Mammary epithelial cell (primary cell): ENCODE measurements at regions of chr19 and their contacts with region 1.

Region 1: DNA sequence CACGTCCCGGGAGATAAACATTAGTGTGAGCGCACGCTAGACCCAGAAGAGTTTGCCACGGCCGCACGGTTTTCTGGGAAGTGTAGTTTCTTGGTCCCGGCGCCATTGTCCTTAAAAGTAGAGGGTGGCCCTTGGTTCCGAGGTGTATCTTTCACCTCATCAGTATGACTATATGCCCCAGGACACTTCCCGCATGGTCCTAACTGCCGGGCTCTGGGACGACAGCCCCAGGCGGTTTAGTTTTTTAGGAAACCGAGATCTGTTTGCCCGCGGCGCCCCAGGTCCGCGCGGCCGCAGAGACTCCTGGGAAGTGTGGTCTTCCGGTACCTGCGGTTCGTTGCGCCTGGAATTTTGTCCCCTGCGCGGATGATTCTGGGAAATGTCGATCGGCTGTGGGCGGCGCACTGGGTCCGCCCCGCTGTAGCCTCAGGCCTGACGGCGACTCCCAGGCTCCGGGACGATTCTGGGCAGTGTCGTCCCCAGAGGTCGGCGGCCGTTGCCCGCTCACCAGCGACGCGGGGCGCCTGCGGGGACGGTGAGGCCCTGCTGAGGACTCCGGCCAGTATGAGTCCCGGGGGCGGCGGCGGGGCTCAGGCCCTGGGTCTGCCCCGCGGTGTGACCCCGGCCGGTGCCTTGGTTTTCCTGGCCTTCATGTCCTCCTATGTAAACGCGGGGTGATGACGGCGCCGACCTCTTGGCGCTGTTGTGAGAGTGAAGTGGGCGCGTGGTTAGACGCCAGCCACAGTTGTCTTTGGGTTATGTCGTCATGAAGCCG is at the start of gene ZNF181:
- DNase-seq: peak; percentile 86
- H3K4me3 ChIP-seq: peak within 1 kb of the TSS; percentile 65 to 94 (median 77)
- H3K27ac ChIP-seq: peak within 1 kb of the TSS; percentile 83
- H3K4me1 ChIP-seq: peaks cover 17% of the 10 kb centered on the region
- H3K27me3 ChIP-seq: no peaks in the 10 kb centered on the region
- CTCF ChIP-seq: no peak
- total RNA-seq, gene ZNF181: 5.4 to 16.8 TPM

Region 2: DNA sequence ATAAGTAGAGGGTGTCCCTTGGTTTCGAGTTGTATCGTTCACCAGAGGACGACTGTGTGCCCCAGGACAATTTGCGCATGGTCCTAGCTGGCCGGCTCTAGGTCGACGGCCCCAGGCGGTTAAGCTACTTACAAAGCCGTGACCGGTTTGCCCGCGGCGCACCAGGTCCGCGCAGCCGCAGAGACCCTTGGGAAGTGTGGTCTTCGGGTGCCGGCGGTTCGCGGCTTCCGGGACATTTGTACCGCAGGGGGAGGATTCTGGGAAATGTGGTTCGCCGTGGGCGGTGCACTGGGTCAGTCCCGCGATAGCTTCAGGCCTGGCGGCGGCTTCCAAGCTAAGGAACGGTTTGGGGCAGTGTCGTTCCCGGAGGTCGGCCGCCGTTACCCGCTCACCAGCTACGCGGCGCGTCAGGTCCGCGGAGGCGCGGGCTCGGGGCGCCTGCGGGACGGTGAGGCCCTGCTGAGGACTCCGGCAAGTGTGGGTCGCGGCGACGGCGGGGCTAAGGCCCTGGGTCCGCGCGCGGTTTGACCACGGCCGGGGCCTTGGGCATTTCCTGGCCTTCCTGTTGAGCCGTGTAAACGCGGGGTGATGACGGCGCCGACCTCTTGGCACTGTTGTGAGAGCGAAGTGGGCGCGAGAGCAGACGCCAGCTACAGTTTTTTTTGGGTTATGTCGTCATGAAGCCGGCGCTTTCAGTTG is 56.5 kb before region 1 on chr19 and contains the start of gene ZNF302:
- CTCF ChIA-PET with region 1: no interaction called
- dilution Hi-C with region 1: no loop called
- in situ Hi-C with region 1: no loop called
- intact Hi-C with region 1: loop called (anchors 1 kb)
- DNase-seq: peak; percentile 94
- H3K4me3 ChIP-seq: peak within 1 kb of the TSS; percentile 71 to 95 (median 86)
- H3K27ac ChIP-seq: peak within 1 kb of the TSS; percentile 84
- H3K4me1 ChIP-seq: peaks cover 5% of the 10 kb centered on the region
- H3K27me3 ChIP-seq: no peaks in the 10 kb centered on the region
- CTCF ChIP-seq: no peak
- total RNA-seq, gene ZNF302: 12.1 to 13.8 TPM

Region 3: DNA sequence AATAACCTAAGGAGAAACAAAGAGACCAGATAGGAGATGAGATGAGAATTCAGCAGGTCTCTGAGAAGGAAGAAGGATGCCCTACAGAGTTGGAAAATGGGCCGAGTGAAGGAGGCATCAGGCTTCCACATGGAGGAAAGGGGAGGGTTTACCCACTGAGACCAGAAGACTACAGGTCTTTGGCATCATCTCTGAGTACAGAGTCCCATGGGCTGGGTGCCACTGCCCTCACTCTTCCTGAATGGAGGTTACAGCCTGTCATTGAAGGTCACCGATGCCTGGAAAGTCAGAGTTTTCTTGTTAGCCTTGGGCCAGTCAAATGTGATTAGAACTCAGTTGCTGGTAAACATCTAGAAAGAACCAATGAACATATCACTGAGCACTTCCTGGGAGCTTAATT is 46.7 kb before region 1 on chr19:
- CTCF ChIA-PET with region 1: no interaction called
- dilution Hi-C with region 1: loop called (anchors 5 kb)
- in situ Hi-C with region 1: no loop called
- intact Hi-C with region 1: no loop called
- DNase-seq: no peak
- H3K4me3 ChIP-seq: no peak overlapping the region
- H3K27ac ChIP-seq: no peak overlapping the region
- H3K4me1 ChIP-seq: no peaks in the 10 kb centered on the region
- H3K27me3 ChIP-seq: no peaks in the 10 kb centered on the region
- CTCF ChIP-seq: no peak

Region 4: DNA sequence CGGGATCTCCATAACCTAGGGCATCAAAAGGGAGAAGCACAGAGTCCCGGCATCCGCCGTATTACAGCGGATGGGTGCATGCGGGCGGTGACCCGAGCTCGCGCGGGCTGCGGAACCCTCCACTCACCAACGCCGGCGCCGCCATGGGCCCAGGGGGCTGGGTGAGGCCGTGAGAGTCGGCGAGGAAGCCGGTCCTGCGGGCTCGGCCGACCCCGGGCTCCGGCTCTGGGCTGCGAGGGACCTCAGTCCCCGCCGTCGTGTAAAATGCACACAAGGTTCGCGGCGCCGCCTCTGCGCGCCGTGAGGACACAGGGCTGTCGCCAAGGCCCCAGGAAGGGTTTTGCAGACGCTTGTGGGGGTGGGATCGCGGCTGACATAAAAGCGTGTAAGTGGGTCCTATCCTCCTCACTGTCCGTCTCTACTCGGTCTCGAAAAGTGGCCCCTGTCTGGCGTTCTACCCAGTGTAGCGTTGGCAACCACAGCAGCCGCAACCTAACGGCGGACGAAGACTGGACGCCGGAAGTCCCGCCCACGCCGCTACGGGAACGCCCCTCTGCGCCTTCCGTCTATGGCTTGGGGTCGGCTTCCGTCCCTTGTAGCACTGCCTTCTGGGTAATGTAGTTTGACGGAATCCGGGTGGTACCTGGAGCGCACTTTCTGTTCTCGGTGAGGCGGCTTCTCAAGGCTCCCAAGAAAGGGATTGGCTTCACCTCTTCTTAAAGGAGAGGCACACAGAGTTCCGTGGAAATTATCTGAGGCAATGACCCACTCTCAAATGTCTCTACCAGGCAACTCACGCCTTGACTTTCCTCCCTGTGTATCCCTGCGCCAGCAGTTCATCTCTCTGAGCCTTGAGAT is 38.9 kb after region 1 on chr19 and contains the start of gene ZNF599:
- CTCF ChIA-PET with region 1: no interaction called
- dilution Hi-C with region 1: loop called (anchors 5 kb)
- in situ Hi-C with region 1: no loop called
- intact Hi-C with region 1: loop called (anchors 1 kb)
- DNase-seq: peak; percentile 85
- H3K4me3 ChIP-seq: peak within 1 kb of the TSS; percentile 74 to 83 (median 78)
- H3K27ac ChIP-seq: peak within 1 kb of the TSS; percentile 12
- H3K4me1 ChIP-seq: peaks cover 8% of the 10 kb centered on the region
- H3K27me3 ChIP-seq: no peaks in the 10 kb centered on the region
- CTCF ChIP-seq: no peak
- total RNA-seq, gene ZNF599: 4.0 to 5.7 TPM

Region 5: DNA sequence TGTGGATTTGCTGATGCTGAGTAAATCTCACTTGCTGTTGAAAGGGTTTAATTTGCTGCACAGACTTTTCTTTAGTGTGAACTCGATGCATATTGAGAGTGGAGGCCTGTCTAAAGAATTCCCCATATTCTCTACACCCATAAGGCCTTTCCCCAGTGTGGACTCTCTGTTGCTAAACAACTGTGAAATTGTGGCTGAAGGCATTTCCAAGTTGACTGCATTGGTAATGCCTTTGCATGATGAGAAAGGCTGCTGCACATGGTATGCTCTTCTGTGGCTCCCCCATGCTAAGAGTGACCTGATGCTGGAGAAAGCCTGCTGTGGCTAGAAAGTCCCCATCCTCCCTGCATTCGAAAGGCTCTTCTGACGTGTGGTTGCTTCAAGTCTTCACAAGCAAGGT is 45.6 kb after region 1 on chr19:
- CTCF ChIA-PET with region 1: no interaction called
- dilution Hi-C with region 1: loop called (anchors 5 kb)
- in situ Hi-C with region 1: no loop called
- intact Hi-C with region 1: no loop called
- DNase-seq: no peak
- H3K4me3 ChIP-seq: no peak overlapping the region
- H3K27ac ChIP-seq: no peak overlapping the region
- H3K4me1 ChIP-seq: no peaks in the 10 kb centered on the region
- H3K27me3 ChIP-seq: peaks cover 4% of the 10 kb centered on the region
- CTCF ChIP-seq: no peak

Region 6: GRCh38 chr19:34832581-34833112 is 98.6 kb after region 1 on chr19:
- CTCF ChIA-PET with region 1: no interaction called
- dilution Hi-C with region 1: loop called (anchors 5 kb)
- in situ Hi-C with region 1: no loop called
- intact Hi-C with region 1: no loop called
- DNase-seq: no peak
- H3K4me3 ChIP-seq: no peak overlapping the region
- H3K27ac ChIP-seq: no peak overlapping the region
- H3K4me1 ChIP-seq: no peaks in the 10 kb centered on the region
- H3K27me3 ChIP-seq: no peaks in the 10 kb centered on the region
- CTCF ChIP-seq: no peak

Region 7: GRCh38 chr19:34926685-34927375 is 192.8 kb after region 1 on chr19 and contains the start of gene ZNF30:
- CTCF ChIA-PET with region 1: no interaction called
- dilution Hi-C with region 1: no loop called
- in situ Hi-C with region 1: no loop called
- intact Hi-C with region 1: loop called (anchors 1 kb)
- DNase-seq: peak; percentile 84
- H3K4me3 ChIP-seq: peak within 1 kb of the TSS; percentile 78 to 99 (median 80)
- H3K27ac ChIP-seq: peak within 1 kb of the TSS; percentile 11
- H3K4me1 ChIP-seq: peaks cover 6% of the 10 kb centered on the region
- H3K27me3 ChIP-seq: no peaks in the 10 kb centered on the region
- CTCF ChIP-seq: no peak
- total RNA-seq, gene ZNF30: 3.5 to 3.8 TPM

Region 8: GRCh38 chr19:35114353-35115176 is 380.6 kb after region 1 on chr19:
- CTCF ChIA-PET with region 1: no interaction called
- dilution Hi-C with region 1: no loop called
- in situ Hi-C with region 1: no loop called
- intact Hi-C with region 1: no loop called
- DNase-seq: peak; percentile 68
- H3K4me3 ChIP-seq: peak overlapping the region; percentile 75 to 94 (median 89)
- H3K27ac ChIP-seq: peak overlapping the region; percentile 91
- H3K4me1 ChIP-seq: peaks cover 50% of the 10 kb centered on the region
- H3K27me3 ChIP-seq: no peaks in the 10 kb centered on the region
- CTCF ChIP-seq: peak; percentile 99 to 100